Activated CD4-positive, alpha-beta T cell treated with anti-CD3 and anti-CD28 coated beads, Interleukin-2, amount 10 ng/mL, durations not matched to agents 7 days and 5 days (primary cell): ENCODE measurements at regions of chr6 and their contacts with region 1.

Region 1: DNA sequence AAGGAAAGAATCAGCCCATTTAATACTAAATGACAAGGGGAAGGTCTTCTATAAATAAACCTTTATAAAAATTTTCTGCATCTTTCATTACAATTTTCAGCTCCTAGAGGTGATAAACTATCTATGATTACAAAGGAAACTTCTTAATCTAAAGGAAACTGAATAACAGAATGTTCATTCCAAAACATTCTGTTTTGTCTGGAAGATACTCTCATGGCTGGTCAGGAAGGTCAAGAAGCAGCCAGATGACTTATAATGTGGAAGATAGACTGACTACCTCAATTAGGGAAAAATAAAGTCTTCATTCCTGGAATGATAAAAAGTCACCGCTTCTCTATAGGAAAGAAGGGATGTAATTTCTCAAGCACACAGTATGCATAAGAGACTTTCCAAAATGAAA is 131.3 kb downstream of the GMDS start:
- DNase-seq: no peak
- H3K4me3 Mint-ChIP-seq: no peak overlapping the region
- H3K27ac Mint-ChIP-seq: no peak overlapping the region
- H3K4me1 Mint-ChIP-seq: peaks cover 16% of the 10 kb centered on the region
- H3K27me3 Mint-ChIP-seq: no peaks in the 10 kb centered on the region

Region 2: GRCh38 chr6:1792989-1793388 is 321.1 kb before region 1 on chr6:
- CTCF ChIA-PET with region 1: no interaction called
- POLR2A ChIA-PET with region 1: interaction called, 10 read pairs
- DNase-seq: peak; percentile 14
- H3K4me3 Mint-ChIP-seq: no peak overlapping the region
- H3K27ac Mint-ChIP-seq: no peak overlapping the region
- H3K4me1 Mint-ChIP-seq: peaks cover 10% of the 10 kb centered on the region
- H3K27me3 Mint-ChIP-seq: no peaks in the 10 kb centered on the region

Region 3: GRCh38 chr6:2101213-2101612 is 12.9 kb before region 1 on chr6:
- CTCF ChIA-PET with region 1: no interaction called
- POLR2A ChIA-PET with region 1: no interaction called
- DNase-seq: no peak
- H3K4me3 Mint-ChIP-seq: no peak overlapping the region
- H3K27ac Mint-ChIP-seq: no peak overlapping the region
- H3K4me1 Mint-ChIP-seq: peaks cover 1% of the 10 kb centered on the region
- H3K27me3 Mint-ChIP-seq: no peaks in the 10 kb centered on the region

Region 4: GRCh38 chr6:2157441-2158127 is 43.5 kb after region 1 on chr6:
- CTCF ChIA-PET with region 1: no interaction called
- POLR2A ChIA-PET with region 1: no interaction called
- DNase-seq: peak; percentile 39
- H3K4me3 Mint-ChIP-seq: no peak overlapping the region
- H3K27ac Mint-ChIP-seq: no peak overlapping the region
- H3K4me1 Mint-ChIP-seq: peaks cover 25% of the 10 kb centered on the region
- H3K27me3 Mint-ChIP-seq: peaks cover 9% of the 10 kb centered on the region

Region 5: GRCh38 chr6:2376429-2377355 is 262.6 kb after region 1 on chr6:
- CTCF ChIA-PET with region 1: no interaction called
- POLR2A ChIA-PET with region 1: no interaction called
- DNase-seq: no peak
- H3K4me3 Mint-ChIP-seq: no peak overlapping the region
- H3K27ac Mint-ChIP-seq: no peak overlapping the region
- H3K4me1 Mint-ChIP-seq: no peaks in the 10 kb centered on the region
- H3K27me3 Mint-ChIP-seq: no peaks in the 10 kb centered on the region